PC-9 (cell line): ENCODE measurements at regions of chr9 and their contacts with region 1.

Region 1: DNA sequence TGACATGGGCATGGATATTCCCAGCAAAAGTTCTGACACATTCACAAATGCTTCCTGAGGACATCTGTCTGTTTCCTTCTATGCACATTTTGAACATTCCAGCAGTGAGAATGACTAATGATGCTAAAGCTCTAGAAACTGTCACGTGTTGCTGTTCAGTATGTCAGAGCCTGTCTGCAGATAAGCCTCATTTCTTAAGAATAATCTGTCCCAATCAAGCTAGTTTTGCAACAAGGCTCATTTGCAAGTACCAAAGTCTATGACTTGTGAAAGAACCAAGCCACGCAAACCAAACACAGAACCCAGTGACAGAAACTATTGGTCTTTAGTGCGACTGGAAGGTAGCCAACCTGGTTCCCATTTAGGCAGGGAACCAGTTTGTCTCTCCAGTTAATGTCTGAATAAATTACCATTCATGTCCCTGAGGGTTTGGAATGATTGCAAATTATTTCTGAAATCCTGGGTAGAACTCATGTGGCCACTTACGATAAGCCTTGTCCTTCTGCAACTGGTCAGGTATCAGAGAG is 178.5 kb downstream of the C9orf152 start:
- DNase-seq: peak; percentile 46 to 91
- H3K4me3 ChIP-seq: no peak overlapping the region
- H3K27ac ChIP-seq: peak overlapping the region; percentile 5; the same call in 1 of the 2 replicates
- H3K4me1 ChIP-seq: peaks cover 40% of the 10 kb centered on the region
- H3K27me3 ChIP-seq: no peaks in the 10 kb centered on the region
- CTCF ChIP-seq: no peak

Region 2: GRCh38 chr9:110015759-110016158 is 13.7 kb before region 1 on chr9:
- CTCF ChIA-PET with region 1: no interaction called
- POLR2A ChIA-PET with region 1: interaction called, 3 read pairs
- intact Hi-C with region 1: loop called (anchors 1 kb)
- DNase-seq: peak; percentile 60 to 71
- H3K4me3 ChIP-seq: no peak overlapping the region
- H3K27ac ChIP-seq: peak overlapping the region; percentile 59
- H3K4me1 ChIP-seq: peaks cover 12% of the 10 kb centered on the region
- H3K27me3 ChIP-seq: no peaks in the 10 kb centered on the region
- CTCF ChIP-seq: no peak